ENCODE measurements at regions of chr6 and their contacts with region 1.

Region 1: GRCh38 chr6:154606457-154606856 is 96.0 kb upstream of the CNKSR3 start:
- DNase-seq: peak; percentile 97
- H3K4me3 Mint-ChIP-seq: peak overlapping the region; percentile 2
- H3K27ac Mint-ChIP-seq: peak overlapping the region; percentile 79
- H3K4me1 Mint-ChIP-seq: peaks cover 40% of the 10 kb centered on the region
- H3K27me3 Mint-ChIP-seq: peaks cover 2% of the 10 kb centered on the region

Region 2: DNA sequence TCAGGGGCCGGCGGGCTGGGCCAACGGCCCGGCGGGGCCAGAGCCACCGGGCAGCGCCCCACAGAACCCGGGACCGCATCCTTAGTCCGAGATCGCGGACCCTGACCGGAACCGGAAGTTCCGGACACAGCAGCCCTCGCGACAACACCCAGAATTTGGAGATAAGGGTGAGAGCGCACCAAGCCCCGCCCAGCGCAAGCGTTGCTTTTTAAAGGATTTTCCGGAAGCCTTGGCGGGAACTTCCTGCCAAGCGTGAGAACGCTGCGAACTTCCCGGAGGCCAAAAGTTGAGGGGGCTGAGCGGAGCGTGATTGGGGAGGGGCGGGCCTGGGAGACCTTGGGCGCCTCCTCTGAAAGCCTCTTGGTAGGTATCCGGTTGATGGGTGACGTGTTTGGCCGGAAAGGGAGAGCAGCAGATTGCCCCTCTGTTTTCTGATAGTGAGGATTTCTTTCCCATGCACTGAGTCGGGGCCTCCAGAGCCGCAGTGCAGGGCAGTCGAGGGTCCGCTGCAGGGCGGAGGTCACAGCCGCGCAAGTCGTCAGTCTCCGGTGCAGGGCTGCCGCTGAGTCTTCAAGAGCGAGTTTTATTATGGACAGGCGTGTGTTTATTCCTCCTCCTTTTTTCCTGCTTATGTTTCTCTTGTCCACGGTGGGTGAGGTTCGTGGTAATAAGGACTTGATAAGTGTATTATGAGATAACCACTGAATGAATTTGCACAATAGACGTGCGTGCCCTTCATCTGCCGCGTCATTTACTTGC is 1603.7 kb before region 1 on chr6 and contains the start of gene MTRF1L:
- CTCF ChIA-PET with region 1: no interaction called
- intact Hi-C with region 1: loop called (anchors 5 kb)
- DNase-seq: peak; percentile 95
- H3K4me3 Mint-ChIP-seq: peak within 1 kb of the TSS; percentile 98
- H3K27ac Mint-ChIP-seq: peak within 1 kb of the TSS; percentile 94
- H3K4me1 Mint-ChIP-seq: peaks cover 33% of the 10 kb centered on the region
- H3K27me3 Mint-ChIP-seq: no peaks in the 10 kb centered on the region
- total RNA-seq, gene MTRF1L: 11.6 to 12.0 TPM

Region 3: DNA sequence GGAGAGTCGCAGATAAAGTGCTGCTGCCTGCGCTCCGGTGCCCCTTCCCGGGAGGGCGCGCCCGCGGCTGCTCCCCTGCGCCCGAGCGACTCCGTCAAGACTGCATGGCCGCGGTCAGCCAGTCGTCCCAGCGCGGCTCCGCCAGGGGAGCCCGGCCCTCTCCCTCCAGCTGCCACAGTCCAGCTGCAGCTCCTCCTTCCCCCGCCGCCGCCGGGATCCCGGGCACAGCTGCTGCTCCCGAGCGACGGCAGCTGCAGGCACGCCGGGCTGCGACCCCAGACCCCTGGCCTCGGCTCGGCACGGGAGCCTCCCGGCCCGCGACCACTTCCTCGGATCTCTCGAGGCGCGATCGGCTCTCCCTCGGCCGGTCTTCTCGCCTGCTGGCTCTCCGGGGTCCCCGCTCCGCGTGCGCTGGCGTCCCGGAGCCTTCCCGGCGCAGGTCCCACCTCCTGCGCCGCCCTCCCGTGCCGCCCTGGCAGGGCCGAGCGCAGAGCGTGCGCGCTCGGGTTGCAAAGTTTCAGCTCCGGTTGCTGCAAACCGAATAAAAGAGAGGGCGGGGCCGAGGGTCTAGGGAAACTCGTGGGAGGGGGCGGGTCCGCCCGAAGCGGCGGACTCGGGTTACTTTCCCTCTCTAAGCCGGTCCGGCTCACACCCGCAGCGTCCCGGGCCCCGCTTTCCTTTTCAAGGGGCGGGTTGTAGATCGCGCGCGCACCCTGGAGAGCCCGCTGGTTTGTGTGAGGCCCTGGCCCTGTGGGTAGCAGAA is 96.1 kb before region 1 on chr6 and contains the start of gene CNKSR3:
- CTCF ChIA-PET with region 1: no interaction called
- intact Hi-C with region 1: loop called (anchors 5 kb)
- DNase-seq: peak; percentile 50
- H3K4me3 Mint-ChIP-seq: peak within 1 kb of the TSS; percentile 63
- H3K27ac Mint-ChIP-seq: no peak within 1 kb of the TSS
- H3K4me1 Mint-ChIP-seq: peaks cover 9% of the 10 kb centered on the region
- H3K27me3 Mint-ChIP-seq: peaks cover 50% of the 10 kb centered on the region
- total RNA-seq, gene CNKSR3: 0.12 TPM

Region 4: DNA sequence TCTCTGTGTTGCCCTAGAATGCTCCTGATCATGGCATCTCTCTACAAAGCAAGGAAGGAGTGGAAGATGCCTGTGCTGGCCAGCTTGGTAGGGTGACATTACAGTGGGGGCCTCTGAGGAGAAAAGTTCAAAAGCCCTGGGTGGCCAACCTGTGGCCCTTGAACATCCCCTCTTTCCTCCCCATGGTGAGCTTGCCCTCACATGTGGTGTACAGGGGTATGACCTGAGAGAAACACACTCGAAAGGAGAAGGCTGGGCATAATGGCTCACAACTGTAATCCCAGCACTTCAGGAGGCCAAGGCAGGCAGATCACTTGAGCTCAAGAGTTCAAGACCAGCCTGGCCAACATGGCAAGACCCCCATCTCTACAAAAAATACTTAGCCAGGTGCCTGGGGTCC is 90.2 kb after region 1 on chr6:
- CTCF ChIA-PET with region 1: no interaction called
- intact Hi-C with region 1: no loop called
- DNase-seq: no peak
- H3K4me3 Mint-ChIP-seq: no peak overlapping the region
- H3K27ac Mint-ChIP-seq: no peak overlapping the region
- H3K4me1 Mint-ChIP-seq: no peaks in the 10 kb centered on the region
- H3K27me3 Mint-ChIP-seq: no peaks in the 10 kb centered on the region

Region 5: DNA sequence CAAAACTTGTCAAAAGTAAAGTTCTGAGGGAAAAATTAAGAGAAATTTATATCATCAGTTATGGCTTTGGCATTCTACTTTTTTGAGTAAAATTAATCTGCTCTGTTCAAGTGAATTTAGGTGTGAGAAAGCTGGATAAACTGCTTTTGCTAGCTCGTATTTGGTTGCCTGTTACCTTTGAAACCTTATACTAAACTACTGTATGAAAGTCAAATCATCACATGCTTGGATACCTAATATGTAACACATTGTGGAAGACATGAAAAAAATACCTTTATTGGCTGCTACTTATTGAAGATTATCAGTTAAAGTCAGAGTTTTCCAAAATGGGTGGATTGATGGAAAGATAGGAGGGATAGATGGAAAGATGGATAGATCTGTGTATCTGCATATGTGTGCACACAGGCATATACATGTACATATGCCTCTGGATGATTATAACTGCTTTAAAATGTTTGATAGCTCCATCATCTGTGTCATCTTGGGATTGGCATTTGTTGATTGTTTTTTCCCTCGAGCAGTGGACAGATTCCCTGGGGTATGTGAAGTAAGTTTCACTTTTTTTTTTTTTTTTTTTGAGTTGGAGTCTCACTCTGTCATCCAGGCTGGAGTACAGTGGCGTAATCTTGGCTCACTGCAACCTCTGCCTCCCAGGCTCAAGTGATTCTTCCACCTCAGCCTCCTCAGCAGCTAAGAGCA is 151.0 kb after region 1 on chr6:
- CTCF ChIA-PET with region 1: no interaction called
- intact Hi-C with region 1: no loop called
- DNase-seq: no peak
- H3K4me3 Mint-ChIP-seq: no peak overlapping the region
- H3K27ac Mint-ChIP-seq: peak overlapping the region; percentile 10
- H3K4me1 Mint-ChIP-seq: peaks cover 58% of the 10 kb centered on the region
- H3K27me3 Mint-ChIP-seq: no peaks in the 10 kb centered on the region

Region 6: GRCh38 chr6:155050311-155050710 is 443.9 kb after region 1 on chr6:
- CTCF ChIA-PET with region 1: no interaction called
- intact Hi-C with region 1: loop called (anchors 2 kb)
- DNase-seq: peak; percentile 63
- H3K4me3 Mint-ChIP-seq: no peak overlapping the region
- H3K27ac Mint-ChIP-seq: peak overlapping the region; percentile 79
- H3K4me1 Mint-ChIP-seq: peaks cover 25% of the 10 kb centered on the region
- H3K27me3 Mint-ChIP-seq: peaks cover 8% of the 10 kb centered on the region

Region 7: GRCh38 chr6:155188707-155189496 is 582.4 kb after region 1 on chr6:
- CTCF ChIA-PET with region 1: no interaction called
- intact Hi-C with region 1: loop called (anchors 1 kb)
- DNase-seq: no peak
- H3K4me3 Mint-ChIP-seq: no peak overlapping the region
- H3K27ac Mint-ChIP-seq: no peak overlapping the region
- H3K4me1 Mint-ChIP-seq: peaks cover 50% of the 10 kb centered on the region
- H3K27me3 Mint-ChIP-seq: no peaks in the 10 kb centered on the region

Region 8: GRCh38 chr6:155510879-155511278 is 904.4 kb after region 1 on chr6:
- CTCF ChIA-PET with region 1: no interaction called
- intact Hi-C with region 1: loop called (anchors 5 kb)
- DNase-seq: peak; percentile 40
- H3K4me3 Mint-ChIP-seq: no peak overlapping the region
- H3K27ac Mint-ChIP-seq: peak overlapping the region; percentile 73
- H3K4me1 Mint-ChIP-seq: peaks cover 23% of the 10 kb centered on the region
- H3K27me3 Mint-ChIP-seq: no peaks in the 10 kb centered on the region